Breast epithelium (tissue), 4 donors: ENCODE measurements at regions of chr2 and their contacts with region 1.

Region 1: GRCh38 chr2:152627351-152627957 is 89.8 kb downstream of the PRPF40A start:
- DNase-seq: no peak
- H3K4me3 ChIP-seq: no peak overlapping the region
- H3K27ac ChIP-seq: no peak overlapping the region
- H3K4me1 ChIP-seq: no peaks in the 10 kb centered on the region
- H3K27me3 ChIP-seq: no peaks in the 10 kb centered on the region
- CTCF ChIP-seq: peak in 2 of 3 donors; percentile 39 to 54
- POLR2A ChIP-seq: no peak

Region 2: DNA sequence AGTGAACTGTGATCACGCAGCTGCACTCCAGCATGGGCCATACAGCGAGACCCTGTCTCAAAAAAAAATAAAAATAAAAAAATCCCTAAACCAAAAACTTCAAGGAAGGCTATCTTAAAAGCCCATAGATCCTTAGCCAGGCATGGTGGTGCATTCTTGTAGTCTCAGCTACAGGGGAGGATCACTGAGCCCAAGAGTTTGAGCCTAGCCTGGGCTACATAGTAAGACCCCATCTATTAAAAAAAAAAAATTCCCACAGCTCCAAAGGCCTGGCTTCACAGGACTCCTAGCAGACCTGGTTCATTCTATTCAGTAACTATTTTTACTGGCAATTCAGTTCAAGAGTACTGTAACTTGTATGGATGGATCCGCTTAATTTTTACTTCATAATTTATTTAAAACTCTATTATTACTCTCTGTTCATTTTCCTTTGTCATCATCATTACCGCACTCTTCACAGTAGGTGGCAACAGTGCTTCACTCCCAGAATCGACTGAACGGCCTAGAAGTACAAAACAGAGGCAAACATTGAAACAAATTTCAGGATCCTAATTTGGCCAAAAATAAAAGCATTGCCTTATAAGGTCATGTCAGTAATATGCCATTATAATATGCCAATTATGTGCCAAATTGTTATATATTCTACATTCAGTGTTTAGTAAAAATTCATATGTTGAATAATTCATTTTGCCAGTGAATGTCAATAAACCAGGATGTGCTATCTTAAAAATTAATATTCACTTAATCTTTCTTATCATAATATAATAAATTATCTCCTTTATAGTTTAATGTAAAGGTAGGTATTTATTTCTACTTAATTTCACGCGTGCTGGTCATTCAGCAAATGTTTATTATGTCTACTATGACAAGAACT is 437.6 kb before region 1 on chr2:
- intact Hi-C with region 1: loop called (anchors 10 kb)
- DNase-seq: no peak
- H3K4me3 ChIP-seq: no peak overlapping the region
- H3K27ac ChIP-seq: no peak overlapping the region
- H3K4me1 ChIP-seq: no peaks in the 10 kb centered on the region
- H3K27me3 ChIP-seq: no peaks in the 10 kb centered on the region
- CTCF ChIP-seq: peak in 2 of 3 donors; percentile 76 to 83
- POLR2A ChIP-seq: no peak

Region 3: DNA sequence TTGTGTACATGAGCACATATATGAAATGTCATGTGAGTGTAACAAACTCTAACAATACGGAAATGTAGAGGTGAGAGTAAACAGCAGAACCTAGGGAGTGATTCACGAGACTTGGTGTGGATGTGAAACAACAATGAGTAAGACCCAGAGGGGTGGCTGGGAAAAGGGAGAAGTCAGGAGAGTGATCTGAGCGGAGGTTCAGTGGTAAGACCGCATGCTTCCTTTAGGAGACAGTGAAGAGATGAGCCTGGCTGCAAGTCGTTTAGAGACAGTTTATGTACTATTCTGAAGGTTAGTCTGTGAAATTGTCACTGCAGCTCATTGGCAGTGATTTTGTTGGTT is 60.8 kb before region 1 on chr2:
- intact Hi-C with region 1: no loop called
- DNase-seq: no peak
- H3K4me3 ChIP-seq: no peak overlapping the region
- H3K27ac ChIP-seq: no peak overlapping the region
- H3K4me1 ChIP-seq: no peaks in the 10 kb centered on the region
- H3K27me3 ChIP-seq: no peaks in the 10 kb centered on the region
- CTCF ChIP-seq: no peak
- POLR2A ChIP-seq: no peak

Region 4: DNA sequence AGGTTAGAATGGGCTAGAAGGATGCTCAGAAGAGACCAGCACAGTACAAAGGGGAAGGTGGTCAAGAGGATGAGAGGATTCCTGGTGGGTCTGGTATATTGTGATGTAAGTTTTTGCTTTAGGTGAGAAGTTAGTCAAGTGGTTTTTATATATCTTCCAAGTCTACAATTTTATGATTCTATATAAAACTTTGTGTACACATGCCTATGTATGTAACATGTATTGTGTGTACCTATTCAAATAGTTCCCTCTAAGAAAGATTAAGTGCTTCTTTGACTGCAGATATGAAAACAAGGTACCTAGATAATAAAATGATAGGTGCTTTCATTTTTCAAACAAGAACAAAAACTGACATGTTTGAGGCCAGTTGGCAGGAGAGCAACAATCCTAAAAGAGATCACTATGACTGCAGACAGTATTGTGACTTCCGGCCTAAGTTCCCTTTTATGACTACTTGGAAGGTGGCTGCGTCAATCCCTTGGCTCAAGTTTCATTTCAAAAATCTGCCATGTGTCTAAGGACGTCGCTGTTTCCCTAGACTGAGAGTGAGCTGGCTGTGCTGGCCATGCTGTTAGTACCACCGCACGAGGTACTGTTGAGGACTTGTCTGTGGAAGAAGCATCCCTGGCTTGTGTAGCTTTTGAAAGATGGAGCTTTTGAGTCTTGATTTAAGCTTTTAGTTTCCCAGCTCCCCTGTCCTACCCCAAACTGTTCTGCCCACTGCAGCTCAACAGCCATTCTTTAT is 33.3 kb before region 1 on chr2:
- intact Hi-C with region 1: no loop called
- DNase-seq: no peak
- H3K4me3 ChIP-seq: no peak overlapping the region
- H3K27ac ChIP-seq: peak overlapping the region; percentile 15 to 66
- H3K4me1 ChIP-seq: no peaks in the 10 kb centered on the region
- H3K27me3 ChIP-seq: no peaks in the 10 kb centered on the region
- CTCF ChIP-seq: no peak
- POLR2A ChIP-seq: no peak